PC-9 (cell line): ENCODE measurements at regions of chr17 and their contacts with region 1.

Region 1: DNA sequence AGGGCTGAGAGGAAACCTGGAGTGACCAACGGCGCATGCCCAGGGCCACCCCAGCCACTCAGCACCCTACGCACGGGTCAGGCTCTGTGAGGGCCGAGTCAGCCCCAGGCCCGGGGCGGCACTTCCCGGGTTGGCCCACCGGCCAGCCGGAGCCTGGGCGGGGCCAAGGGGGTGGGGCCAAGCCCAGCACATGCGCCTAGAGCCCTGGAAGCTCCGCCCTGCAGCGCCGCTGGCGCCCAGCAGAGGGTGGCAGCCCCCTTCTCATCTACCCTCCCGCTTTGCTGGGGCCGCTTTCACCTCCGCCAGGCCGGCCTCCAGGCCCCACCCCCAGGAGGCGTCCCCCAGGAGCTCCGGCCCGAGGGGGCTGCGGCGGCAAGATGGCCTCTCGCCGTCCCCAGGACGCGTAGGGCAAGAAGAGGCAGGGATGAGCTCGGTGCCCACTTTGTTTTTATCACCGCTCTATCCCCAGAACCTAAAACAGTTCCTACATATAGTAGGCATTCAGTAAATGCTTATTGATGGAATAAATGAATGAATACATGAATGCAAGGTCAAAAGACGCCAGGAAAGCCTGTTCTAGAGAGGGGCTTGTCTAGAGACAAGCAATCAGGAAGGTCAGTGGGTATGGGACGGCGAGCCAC is 31.3 kb downstream of the MYO18A start:
- DNase-seq: peak; percentile 72 to 94
- H3K4me3 ChIP-seq: peak overlapping the region; percentile 41; the same call in 1 of the 2 replicates
- H3K27ac ChIP-seq: peak overlapping the region; percentile 91
- H3K4me1 ChIP-seq: peaks cover 70% of the 10 kb centered on the region
- H3K27me3 ChIP-seq: no peaks in the 10 kb centered on the region
- CTCF ChIP-seq: peak; percentile 90

Region 2: DNA sequence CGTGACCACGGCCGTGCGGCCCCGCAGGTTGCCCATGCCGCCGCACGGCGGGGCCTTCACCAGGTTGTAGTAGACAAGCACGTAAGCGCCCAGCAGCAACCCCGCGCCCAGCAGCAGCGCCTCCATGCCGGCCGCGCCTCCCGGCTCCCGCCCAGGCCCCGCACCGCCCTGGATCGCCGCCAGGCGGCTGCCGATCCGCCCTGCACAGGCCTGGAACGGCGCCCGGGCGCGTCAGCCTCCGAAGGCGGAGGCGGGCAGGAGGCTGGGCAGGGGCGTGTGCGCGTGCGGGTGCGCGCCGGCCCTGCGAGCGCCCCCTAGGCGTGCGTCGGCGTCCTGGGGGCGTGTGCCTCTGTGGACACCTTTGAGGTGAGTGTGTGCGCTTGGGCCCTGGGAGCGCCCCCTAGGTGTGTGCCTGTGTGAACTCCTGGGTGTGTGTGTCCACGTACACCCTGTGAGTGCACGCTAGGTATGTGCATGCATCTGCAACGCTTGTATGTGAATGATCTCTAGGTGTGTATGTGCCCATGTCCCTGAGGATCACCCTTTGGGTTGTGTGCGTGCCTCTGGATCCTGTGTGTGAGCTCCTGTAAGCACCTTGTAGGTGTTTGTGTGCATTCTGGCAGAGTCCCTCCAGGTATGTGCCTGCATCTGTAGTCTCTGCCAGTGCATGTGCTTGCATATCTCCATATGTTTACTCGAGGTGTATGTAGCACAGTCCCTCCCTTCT is 245.9 kb before region 1 on chr17 and contains the start of gene DHRS13:
- CTCF ChIA-PET with region 1: no interaction called
- POLR2A ChIA-PET with region 1: no interaction called
- intact Hi-C with region 1: no loop called
- DNase-seq: peak; percentile 85 to 94
- H3K4me3 ChIP-seq: peak within 1 kb of the TSS; percentile 73
- H3K27ac ChIP-seq: no peak within 1 kb of the TSS
- H3K4me1 ChIP-seq: peaks cover 15% of the 10 kb centered on the region
- H3K27me3 ChIP-seq: no peaks in the 10 kb centered on the region
- CTCF ChIP-seq: peak; percentile 88
- total RNA-seq, gene DHRS13: 15.8 and 17.5 TPM in 2 replicates

Region 3: DNA sequence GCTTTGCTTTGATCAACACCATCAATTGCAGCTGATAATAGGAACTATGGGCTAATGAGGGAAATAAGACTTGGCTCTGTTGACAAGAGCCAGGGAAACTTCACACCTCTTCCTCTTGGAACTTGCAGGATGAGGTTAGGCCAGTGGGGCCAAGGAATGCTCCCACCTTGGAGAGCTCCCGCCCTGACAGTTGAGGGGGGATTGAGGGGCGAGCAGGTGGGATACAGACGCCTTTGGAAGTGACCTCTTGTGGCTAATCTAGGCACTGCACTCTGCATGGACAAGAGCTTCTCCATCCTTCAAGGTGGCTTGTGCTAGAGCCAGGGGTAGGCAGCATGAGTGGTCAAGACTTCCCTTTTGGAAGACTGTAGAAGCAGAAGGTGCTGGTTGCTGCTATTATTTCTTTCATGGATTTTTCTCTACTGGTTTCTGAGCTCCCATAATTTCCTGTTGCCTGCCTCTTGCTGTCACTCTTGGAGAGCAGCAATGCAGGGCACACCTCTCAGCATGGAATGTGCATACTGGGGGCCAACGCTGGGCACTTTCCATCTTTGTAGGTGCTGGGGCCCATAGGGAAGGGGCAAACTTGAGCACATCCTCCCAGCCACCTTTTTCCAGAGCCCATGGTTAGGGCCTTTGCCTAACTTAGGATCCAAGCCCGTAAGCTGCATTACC is 195.3 kb before region 1 on chr17:
- CTCF ChIA-PET with region 1: no interaction called
- POLR2A ChIA-PET with region 1: no interaction called
- intact Hi-C with region 1: no loop called
- DNase-seq: peak in 1 of 2 experiments; percentile 19
- H3K4me3 ChIP-seq: no peak overlapping the region
- H3K27ac ChIP-seq: no peak overlapping the region
- H3K4me1 ChIP-seq: peaks cover 7% of the 10 kb centered on the region
- H3K27me3 ChIP-seq: no peaks in the 10 kb centered on the region
- CTCF ChIP-seq: peak; percentile 86

Region 4: GRCh38 chr17:29069526-29070041 is 79.3 kb before region 1 on chr17:
- CTCF ChIA-PET with region 1: no interaction called
- POLR2A ChIA-PET with region 1: no interaction called
- intact Hi-C with region 1: no loop called
- DNase-seq: no peak
- H3K4me3 ChIP-seq: no peak overlapping the region
- H3K27ac ChIP-seq: no peak overlapping the region
- H3K4me1 ChIP-seq: no peaks in the 10 kb centered on the region
- H3K27me3 ChIP-seq: no peaks in the 10 kb centered on the region
- CTCF ChIP-seq: no peak

Region 5: GRCh38 chr17:29091604-29092289 is 57.2 kb before region 1 on chr17:
- CTCF ChIA-PET with region 1: no interaction called
- POLR2A ChIA-PET with region 1: no interaction called
- intact Hi-C with region 1: no loop called
- DNase-seq: no peak
- H3K4me3 ChIP-seq: no peak overlapping the region
- H3K27ac ChIP-seq: no peak overlapping the region
- H3K4me1 ChIP-seq: no peaks in the 10 kb centered on the region
- H3K27me3 ChIP-seq: no peaks in the 10 kb centered on the region
- CTCF ChIP-seq: no peak

Region 6: DNA sequence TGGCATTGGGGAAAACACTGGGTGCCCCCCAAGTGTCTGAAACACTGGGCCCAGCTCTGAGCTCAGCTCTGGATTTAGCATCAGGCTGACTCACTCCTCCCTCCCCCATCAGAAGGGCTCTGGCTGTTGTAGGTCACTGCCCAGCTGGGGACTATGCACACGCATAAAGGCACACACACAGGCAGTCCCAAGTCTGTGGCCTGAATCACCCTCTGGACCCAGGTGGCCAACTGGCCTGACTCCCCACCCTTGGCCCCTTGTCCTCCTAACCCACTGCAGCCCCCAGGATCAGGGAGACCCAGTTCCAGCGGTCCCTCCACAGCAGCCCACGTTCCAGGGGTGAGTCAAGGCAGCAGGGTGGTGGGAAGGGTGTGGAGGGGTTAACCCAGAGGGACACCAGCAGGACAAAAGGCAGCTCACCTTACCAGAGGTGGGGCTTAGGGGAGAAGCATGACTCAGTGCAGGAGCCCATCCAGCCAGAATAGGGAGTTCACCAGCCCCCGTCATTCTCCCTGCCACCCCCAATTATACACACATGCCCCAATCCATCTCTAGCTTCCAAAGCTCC is 15.7 kb before region 1 on chr17:
- CTCF ChIA-PET with region 1: interaction called, 15 read pairs
- POLR2A ChIA-PET with region 1: interaction called, 6 read pairs
- intact Hi-C with region 1: no loop called
- DNase-seq: peak; percentile 83 to 89
- H3K4me3 ChIP-seq: peak overlapping the region; percentile 19; the same call in 1 of the 2 replicates
- H3K27ac ChIP-seq: peak overlapping the region; percentile 68
- H3K4me1 ChIP-seq: peaks cover 47% of the 10 kb centered on the region
- H3K27me3 ChIP-seq: no peaks in the 10 kb centered on the region
- CTCF ChIP-seq: no peak

Region 7: GRCh38 chr17:29219378-29220047 is 70.6 kb after region 1 on chr17:
- CTCF ChIA-PET with region 1: interaction called, 29 read pairs
- POLR2A ChIA-PET with region 1: no interaction called
- intact Hi-C with region 1: loop called (anchors 1 kb)
- DNase-seq: peak; percentile 70 to 80
- H3K4me3 ChIP-seq: no peak overlapping the region
- H3K27ac ChIP-seq: no peak overlapping the region
- H3K4me1 ChIP-seq: peaks cover 13% of the 10 kb centered on the region
- H3K27me3 ChIP-seq: no peaks in the 10 kb centered on the region
- CTCF ChIP-seq: peak; percentile 95

Region 8: GRCh38 chr17:29241015-29241963 is 92.4 kb after region 1 on chr17:
- CTCF ChIA-PET with region 1: interaction called, 4 read pairs
- POLR2A ChIA-PET with region 1: interaction called, 15 read pairs
- intact Hi-C with region 1: loop called (anchors 2 kb)
- DNase-seq: peak; percentile 73 to 97
- H3K4me3 ChIP-seq: no peak overlapping the region
- H3K27ac ChIP-seq: peak overlapping the region; percentile 73
- H3K4me1 ChIP-seq: peaks cover 47% of the 10 kb centered on the region
- H3K27me3 ChIP-seq: no peaks in the 10 kb centered on the region
- CTCF ChIP-seq: no peak